Breast epithelium (tissue), 4 donors: ENCODE measurements at regions of chr12 and their contacts with region 1.

Region 1: DNA sequence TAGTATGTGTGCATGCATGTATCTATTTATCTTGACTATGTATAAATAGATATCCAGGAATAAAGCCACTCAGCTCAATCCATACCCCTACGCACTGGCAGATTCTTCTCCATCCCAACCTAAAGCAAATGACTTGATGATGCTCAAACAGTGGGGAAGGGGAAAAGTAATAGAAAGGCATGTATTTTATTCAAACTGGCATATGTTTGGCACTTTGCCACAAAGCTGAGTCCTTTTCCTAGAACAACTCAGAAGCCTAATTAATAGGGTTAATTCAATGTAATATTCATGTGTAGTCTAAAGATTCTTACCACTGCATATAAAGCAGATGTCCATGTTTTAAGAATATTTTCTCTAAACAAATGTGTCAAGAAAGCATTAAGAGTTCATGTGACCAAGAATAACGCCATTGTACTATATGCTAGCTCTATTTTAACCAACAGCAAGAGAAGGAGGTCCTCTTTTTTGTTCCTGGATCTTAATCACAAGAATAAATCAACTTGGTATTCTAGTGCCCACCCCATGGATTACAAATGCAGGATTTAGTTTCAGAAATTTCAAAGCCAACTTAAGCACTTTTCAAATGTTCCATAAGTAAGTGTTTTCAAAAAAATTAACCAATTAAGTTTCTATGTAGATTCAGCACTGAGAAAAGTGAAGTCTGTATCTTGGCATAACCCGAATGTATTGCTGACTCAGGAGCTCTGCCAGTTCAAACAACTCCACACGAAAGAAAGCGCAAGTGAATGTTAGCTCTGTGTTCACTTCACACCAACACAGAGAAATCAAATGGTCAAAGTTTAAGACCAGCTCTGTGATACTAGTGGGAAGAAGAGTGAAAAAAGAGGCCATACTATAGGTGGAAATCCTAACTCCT is 233.6 kb downstream of the MED13L start:
- DNase-seq: no peak
- H3K4me3 ChIP-seq: no peak overlapping the region
- H3K27ac ChIP-seq: no peak overlapping the region
- H3K4me1 ChIP-seq: peaks cover 0 to 3% of the 10 kb centered on the region in 2 donors
- H3K27me3 ChIP-seq: no peaks in the 10 kb centered on the region
- CTCF ChIP-seq: no peak
- POLR2A ChIP-seq: no peak

Region 2: GRCh38 chr12:115574826-115575225 is 469.1 kb before region 1 on chr12:
- intact Hi-C with region 1: loop called (anchors 5 kb)
- DNase-seq: no peak
- H3K4me3 ChIP-seq: no peak overlapping the region
- H3K27ac ChIP-seq: no peak overlapping the region
- H3K4me1 ChIP-seq: no peaks in the 10 kb centered on the region
- H3K27me3 ChIP-seq: no peaks in the 10 kb centered on the region
- CTCF ChIP-seq: no peak
- POLR2A ChIP-seq: no peak